Dorsolateral prefrontal cortex (tissue), 120 donors: ENCODE measurements at regions of chr1 and their contacts with region 1.

Region 1: DNA sequence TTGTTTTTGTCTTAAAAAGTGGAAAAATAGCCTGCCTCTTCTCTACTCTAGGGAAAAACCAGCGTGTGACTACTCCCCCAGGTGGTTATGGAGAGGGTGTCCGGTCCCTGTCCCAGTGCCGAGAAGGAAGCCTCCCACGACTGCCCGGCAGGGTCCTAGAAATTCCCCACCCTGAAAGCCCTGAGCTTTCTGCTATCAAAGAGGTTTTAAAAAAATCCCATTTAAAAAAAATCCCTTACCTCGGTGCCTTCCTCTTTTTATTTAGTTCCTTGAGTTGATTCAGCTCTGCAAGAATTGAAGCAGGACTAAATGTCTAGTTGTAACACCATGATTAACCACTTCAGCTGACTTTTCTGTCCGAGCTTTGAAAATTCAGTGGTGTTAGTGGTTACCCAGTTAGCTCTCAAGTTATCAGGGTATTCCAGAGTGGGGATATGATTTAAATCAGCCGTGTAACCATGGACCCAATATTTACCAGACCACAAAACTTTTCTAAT is 35.0 kb upstream of the TDRD10 start:
- DNase-seq: no peak
- H3K4me3 ChIP-seq: no peak overlapping the region
- H3K27ac ChIP-seq: peak overlapping the region in 22 of 59 donors; percentile 2 to 69 (median 35)
- H3K27me3 ChIP-seq: no peaks in the 10 kb centered on the region
- CTCF ChIP-seq: peak in 46 of 56 donors; percentile 5 to 57 (median 38)

Region 2: DNA sequence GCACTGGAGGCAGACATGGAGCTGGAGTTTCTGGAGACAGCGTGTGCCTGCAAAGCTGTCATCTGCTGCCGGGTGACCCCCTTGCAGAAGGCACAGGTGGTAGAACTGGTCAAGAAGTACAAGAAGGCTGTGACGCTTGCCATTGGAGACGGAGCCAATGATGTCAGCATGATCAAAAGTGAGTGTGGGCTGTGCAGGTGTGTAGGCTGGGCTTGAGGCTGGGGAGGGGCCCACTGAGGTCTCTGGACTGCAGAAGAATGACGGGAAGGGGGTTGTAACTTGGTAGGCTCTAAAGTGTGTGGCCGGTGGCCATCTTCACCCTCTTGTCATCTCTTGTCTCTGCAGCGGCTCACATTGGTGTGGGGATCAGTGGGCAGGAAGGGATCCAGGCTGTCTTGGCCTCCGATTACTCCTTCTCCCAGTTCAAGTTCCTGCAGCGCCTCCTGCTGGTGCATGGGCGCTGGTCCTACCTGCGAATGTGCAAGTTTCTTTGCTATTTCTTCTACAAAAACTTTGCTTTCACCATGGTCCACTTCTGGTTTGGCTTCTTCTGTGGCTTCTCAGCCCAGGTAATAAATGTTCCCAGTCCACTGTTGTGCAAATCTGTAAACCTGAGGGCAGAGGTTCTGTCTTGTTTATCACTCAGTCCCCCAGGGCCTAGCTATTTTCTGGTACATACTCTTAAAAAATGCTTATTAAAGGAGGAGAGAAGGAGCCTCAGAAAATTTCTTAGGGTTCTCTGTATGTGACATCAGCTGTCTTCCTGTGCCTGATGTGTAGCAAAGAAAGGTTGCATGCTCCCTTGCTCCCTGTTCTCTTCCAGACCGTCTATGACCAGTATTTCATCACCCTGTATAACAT is 121.8 kb before region 1 on chr1:
- intact Hi-C with region 1: loop called in 1 of 2 experiments (anchors 5 kb)
- DNase-seq: no peak
- H3K4me3 ChIP-seq: no peak overlapping the region
- H3K27ac ChIP-seq: no peak overlapping the region
- H3K27me3 ChIP-seq: no peaks in the 10 kb centered on the region
- CTCF ChIP-seq: peak in 53 of 56 donors; percentile 15 to 65 (median 43)

Region 3: GRCh38 chr1:154404984-154405761 is 61.8 kb before region 1 on chr1 and contains the start of gene IL6R:
- intact Hi-C with region 1: no loop called
- DNase-seq: peak; percentile 43 to 93 (median 75)
- H3K4me3 ChIP-seq: peak within 1 kb of the TSS; percentile 48 to 84 (median 75)
- H3K27ac ChIP-seq: peak within 1 kb of the TSS in 58 of 59 donors; percentile 58 to 98 (median 87)
- H3K27me3 ChIP-seq: no peaks in the 10 kb centered on the region
- CTCF ChIP-seq: peak in 54 of 56 donors; percentile 14 to 72 (median 48)
- total RNA-seq, gene IL6R: 5.2 to 32.5 (median 12.2) TPM

Region 4: DNA sequence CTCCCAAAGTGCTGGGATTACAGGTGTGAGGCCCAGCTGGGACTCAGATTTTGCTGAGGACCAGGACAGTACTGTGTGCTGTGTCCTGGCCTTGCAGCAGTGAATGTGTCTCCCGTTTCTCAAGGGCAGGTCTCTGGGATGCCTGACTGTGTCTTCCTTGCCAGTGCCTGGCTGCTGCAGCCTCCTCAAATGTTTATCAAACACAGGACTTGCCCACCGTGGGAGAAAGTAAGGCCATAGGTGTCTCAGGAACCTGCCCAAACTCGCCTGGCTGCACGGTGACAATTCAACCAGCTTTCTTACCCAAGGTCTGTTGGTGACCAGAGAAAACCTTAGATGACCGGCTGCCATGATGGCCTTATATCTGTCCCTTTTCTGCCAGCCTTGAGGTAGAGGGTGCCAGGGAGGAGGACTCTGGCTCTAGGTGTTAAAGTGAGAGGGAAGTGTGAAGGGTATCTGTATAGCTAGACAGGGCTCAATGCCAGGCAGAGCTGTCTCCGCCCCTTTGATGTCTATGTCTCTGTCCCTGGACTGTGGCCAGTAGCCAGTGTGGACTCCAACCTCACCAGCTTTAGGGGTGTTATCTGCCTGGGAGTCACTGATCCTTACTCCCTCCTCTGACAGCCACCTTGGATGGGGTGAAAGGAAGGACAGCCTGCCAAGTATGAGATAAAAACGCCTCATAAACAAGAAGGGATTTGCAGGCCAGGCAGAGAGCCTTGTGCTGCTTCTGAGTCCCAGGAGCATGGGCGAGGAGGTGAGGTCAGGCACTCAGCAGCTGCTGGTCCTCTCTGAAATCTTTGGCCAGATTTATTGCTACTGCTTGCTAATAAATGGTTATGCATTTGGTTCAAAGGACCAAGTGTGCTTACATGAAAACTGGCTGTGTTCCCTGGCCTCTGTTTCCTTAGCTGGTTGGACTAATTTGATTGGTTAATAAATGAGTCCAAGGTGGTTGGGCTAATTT is 39.5 kb before region 1 on chr1:
- intact Hi-C with region 1: loop called (anchors 5 to 10 kb)
- DNase-seq: no peak
- H3K4me3 ChIP-seq: no peak overlapping the region
- H3K27ac ChIP-seq: peak overlapping the region in 40 of 59 donors; percentile 4 to 76 (median 44)
- H3K27me3 ChIP-seq: no peaks in the 10 kb centered on the region
- CTCF ChIP-seq: no peak